Calu3 (cell line): ENCODE measurements at regions of chr1 and their contacts with region 1.

Region 1: GRCh38 chr1:241985787-241986186 is 13.1 kb downstream of the MAP1LC3C start:
- DNase-seq: peak; percentile 60
- H3K4me3 Mint-ChIP-seq: no peak overlapping the region
- H3K27ac Mint-ChIP-seq: no peak overlapping the region
- H3K4me1 Mint-ChIP-seq: peaks cover 13% of the 10 kb centered on the region
- H3K27me3 Mint-ChIP-seq: no peaks in the 10 kb centered on the region
- CTCF ChIP-seq: peak; percentile 58

Region 2: GRCh38 chr1:241950390-241950789 is 35.4 kb before region 1 on chr1:
- CTCF ChIA-PET with region 1: interaction called, 4 read pairs
- intact Hi-C with region 1: loop called (anchors 5 kb)
- DNase-seq: no peak
- H3K4me3 Mint-ChIP-seq: no peak overlapping the region
- H3K27ac Mint-ChIP-seq: no peak overlapping the region
- H3K4me1 Mint-ChIP-seq: no peaks in the 10 kb centered on the region
- H3K27me3 Mint-ChIP-seq: no peaks in the 10 kb centered on the region
- CTCF ChIP-seq: no peak

Region 3: GRCh38 chr1:242128951-242129502 is 143.2 kb after region 1 on chr1:
- CTCF ChIA-PET with region 1: no interaction called
- intact Hi-C with region 1: no loop called
- DNase-seq: no peak
- H3K4me3 Mint-ChIP-seq: no peak overlapping the region
- H3K27ac Mint-ChIP-seq: no peak overlapping the region
- H3K4me1 Mint-ChIP-seq: no peaks in the 10 kb centered on the region
- H3K27me3 Mint-ChIP-seq: no peaks in the 10 kb centered on the region
- CTCF ChIP-seq: no peak

Region 4: GRCh38 chr1:242467556-242468145 is 481.9 kb after region 1 on chr1:
- CTCF ChIA-PET with region 1: no interaction called
- intact Hi-C with region 1: no loop called
- DNase-seq: peak; percentile 74
- H3K4me3 Mint-ChIP-seq: no peak overlapping the region
- H3K27ac Mint-ChIP-seq: no peak overlapping the region
- H3K4me1 Mint-ChIP-seq: peaks cover 10% of the 10 kb centered on the region
- H3K27me3 Mint-ChIP-seq: no peaks in the 10 kb centered on the region
- CTCF ChIP-seq: peak; percentile 73